Colonic mucosa (tissue), 4 donors: ENCODE measurements at regions of chr3 and their contacts with region 1.

Region 1: GRCh38 chr3:192816351-192816750 is 89.0 kb upstream of the FGF12 start:
- DNase-seq: no peak
- H3K4me3 ChIP-seq: no peak overlapping the region
- H3K27ac ChIP-seq: no peak overlapping the region
- H3K4me1 ChIP-seq: no peaks in the 10 kb centered on the region
- H3K27me3 ChIP-seq: no peaks in the 10 kb centered on the region
- CTCF ChIP-seq: peak; percentile 47

Region 2: DNA sequence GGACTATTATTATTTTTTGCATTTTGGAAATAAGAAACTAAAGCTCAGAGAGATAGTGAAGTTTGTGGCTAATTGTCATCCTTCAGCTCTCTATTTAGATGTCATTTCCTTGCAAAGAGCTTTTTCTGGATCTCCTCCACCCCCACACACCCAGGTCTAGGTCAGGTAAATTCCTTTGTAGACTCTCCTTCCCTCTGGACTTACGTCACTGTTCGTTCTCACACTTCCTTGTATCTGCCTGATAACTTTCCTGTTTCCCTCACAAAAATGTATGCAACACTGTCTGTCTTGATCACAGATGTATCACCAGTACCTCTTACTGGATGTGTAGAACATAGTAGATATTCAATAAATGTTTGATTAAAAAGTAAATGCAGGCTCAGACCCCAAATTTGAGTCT is 107.4 kb after region 1 on chr3:
- intact Hi-C with region 1: loop called (anchors 5 kb)
- DNase-seq: no peak
- H3K4me3 ChIP-seq: no peak overlapping the region
- H3K27ac ChIP-seq: no peak overlapping the region
- H3K4me1 ChIP-seq: no peaks in the 10 kb centered on the region
- H3K27me3 ChIP-seq: no peaks in the 10 kb centered on the region
- CTCF ChIP-seq: no peak

Region 3: DNA sequence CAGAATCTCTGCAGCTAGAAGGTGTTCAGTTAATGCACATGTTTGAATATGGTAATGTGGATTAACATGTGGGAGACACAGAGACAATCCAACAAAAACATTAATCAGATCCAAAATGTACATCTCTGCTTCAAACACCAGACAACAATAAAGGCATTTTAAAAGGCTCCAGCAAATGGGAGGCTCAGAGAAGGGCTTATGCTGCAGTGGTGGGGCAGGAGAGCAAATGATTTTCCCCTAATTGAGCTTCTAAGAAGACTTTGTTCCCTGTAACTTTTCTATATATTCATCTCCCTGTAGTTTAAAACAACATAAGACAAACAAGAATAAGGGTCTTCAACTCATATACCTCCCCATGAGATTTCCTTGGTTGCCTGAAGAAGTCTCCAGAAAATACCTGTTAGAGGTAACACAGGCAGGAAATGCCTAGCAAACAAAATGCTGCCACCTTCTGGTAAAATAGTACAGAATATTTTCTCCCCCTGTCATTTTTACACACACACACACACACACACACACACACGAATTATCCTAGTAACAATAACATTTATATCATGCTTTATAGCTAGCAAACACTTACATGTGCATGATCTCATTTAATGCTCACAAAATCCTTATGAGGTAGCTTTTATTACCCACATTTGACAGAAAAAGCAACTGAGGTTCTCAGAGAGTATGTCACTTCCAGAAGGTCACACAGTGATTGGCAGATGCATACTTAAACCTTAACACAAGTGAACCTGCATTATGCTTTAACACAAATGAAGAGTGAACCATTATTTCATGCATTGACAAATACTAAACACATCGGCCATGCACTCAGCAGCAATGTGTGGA is 224.7 kb after region 1 on chr3:
- intact Hi-C with region 1: loop called (anchors 2 kb)
- DNase-seq: no peak
- H3K4me3 ChIP-seq: no peak overlapping the region
- H3K27ac ChIP-seq: no peak overlapping the region
- H3K4me1 ChIP-seq: no peaks in the 10 kb centered on the region
- H3K27me3 ChIP-seq: no peaks in the 10 kb centered on the region
- CTCF ChIP-seq: peak; percentile 21

Region 4: GRCh38 chr3:193314161-193314560 is 497.8 kb after region 1 on chr3:
- intact Hi-C with region 1: no loop called
- DNase-seq: no peak
- H3K4me3 ChIP-seq: no peak overlapping the region
- H3K27ac ChIP-seq: no peak overlapping the region
- H3K4me1 ChIP-seq: no peaks in the 10 kb centered on the region
- H3K27me3 ChIP-seq: no peaks in the 10 kb centered on the region
- CTCF ChIP-seq: no peak